ENCODE measurements at regions of chr2 and their contacts with region 1.

Region 1: DNA sequence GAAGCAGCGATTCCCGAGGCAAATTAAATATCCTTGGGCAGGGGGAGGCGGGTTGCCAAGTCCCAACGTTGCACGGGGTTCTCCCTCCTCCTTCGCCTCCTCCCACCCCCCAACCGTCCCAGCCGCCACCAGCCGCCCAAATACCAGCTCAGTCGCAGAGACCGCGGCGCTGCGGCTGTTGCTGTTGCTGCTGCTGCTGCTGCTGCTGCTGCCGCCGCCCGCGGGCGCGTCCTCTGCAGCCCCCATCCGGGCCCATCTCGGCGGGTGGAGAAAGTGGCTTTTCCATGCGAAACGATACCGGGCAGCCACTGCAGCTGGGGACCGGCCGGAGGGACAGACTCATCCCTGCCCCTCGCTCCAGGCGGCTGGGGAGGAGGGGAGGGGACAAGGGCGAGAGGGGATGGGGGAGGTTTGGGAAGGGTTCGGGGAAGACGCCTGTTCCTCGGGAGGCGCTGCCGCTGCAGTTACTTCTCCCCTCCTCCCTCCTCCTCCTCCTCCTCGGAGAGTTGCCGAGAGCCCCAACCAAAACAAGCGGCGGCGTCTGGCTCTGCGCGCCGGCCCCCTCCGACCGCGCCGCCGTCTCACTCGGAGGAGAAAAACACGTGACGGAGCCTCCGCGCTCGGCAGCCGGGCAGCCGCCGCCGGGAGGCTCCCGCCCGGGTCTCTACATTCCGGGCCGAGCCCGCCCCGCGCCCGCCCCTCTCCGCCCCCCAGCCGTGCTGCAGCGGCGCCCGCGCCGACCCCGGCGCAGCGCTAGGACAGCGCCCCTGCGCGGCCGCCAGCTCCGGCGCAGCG is at the start of gene IRS1:
- DNase-seq: peak; percentile 71
- ATAC-seq: peak; percentile 65
- H3K4me3 Mint-ChIP-seq: peak within 1 kb of the TSS; percentile 84
- H3K27ac Mint-ChIP-seq: peak within 1 kb of the TSS; percentile 80
- H3K4me1 Mint-ChIP-seq: peaks cover 45% of the 10 kb centered on the region
- H3K27me3 Mint-ChIP-seq: peaks cover under 1% of the 10 kb centered on the region
- CTCF ChIP-seq: no peak
- total RNA-seq, gene IRS1: 3.5 to 4.0 TPM

Region 2: DNA sequence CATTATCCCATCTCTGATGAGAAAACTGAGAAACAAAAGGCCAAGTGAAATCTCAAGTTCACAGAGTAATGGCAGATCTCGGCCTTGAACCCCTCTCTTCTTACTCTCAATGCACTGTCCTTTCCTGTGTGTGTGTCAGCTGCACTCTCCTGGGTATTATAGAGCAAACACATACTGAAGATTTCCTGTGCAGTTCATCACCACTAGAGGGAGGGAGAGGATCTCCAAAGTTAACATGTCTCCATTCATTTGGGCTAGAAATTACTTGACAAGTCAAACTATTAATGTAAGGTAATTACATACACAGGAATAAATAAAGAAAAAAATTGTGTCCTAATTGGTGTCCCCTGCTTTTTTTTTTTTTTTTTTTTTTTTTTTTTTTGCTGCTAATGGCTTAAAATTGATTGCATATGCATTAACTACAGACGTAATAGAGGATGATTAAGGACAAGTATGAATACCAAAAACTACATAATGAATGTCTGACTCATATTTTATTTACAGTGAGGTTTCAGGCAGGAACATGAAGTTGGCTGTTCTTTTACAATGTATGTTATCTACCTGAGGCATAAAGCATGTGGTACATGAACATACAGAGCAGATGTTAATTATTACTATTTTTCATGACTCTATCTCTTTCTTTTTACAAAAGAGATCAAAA is 1130.6 kb before region 1 on chr2:
- CTCF ChIA-PET with region 1: interaction called, 3 read pairs
- POLR2A ChIA-PET with region 1: no interaction called
- intact Hi-C with region 1: loop called (anchors 5 kb)
- DNase-seq: peak; percentile 19
- ATAC-seq: peak; percentile 80
- H3K4me3 Mint-ChIP-seq: no peak overlapping the region
- H3K27ac Mint-ChIP-seq: no peak overlapping the region
- H3K4me1 Mint-ChIP-seq: no peaks in the 10 kb centered on the region
- H3K27me3 Mint-ChIP-seq: peaks cover 8% of the 10 kb centered on the region
- CTCF ChIP-seq: peak; percentile 68

Region 3: GRCh38 chr2:226215902-226216503 is 583.4 kb before region 1 on chr2:
- CTCF ChIA-PET with region 1: interaction called, 37 read pairs
- POLR2A ChIA-PET with region 1: interaction called, 3 read pairs
- intact Hi-C with region 1: loop called (anchors 5 kb)
- DNase-seq: peak; percentile 75
- ATAC-seq: peak; percentile 90
- H3K4me3 Mint-ChIP-seq: no peak overlapping the region
- H3K27ac Mint-ChIP-seq: no peak overlapping the region
- H3K4me1 Mint-ChIP-seq: no peaks in the 10 kb centered on the region
- H3K27me3 Mint-ChIP-seq: peaks cover 5% of the 10 kb centered on the region
- CTCF ChIP-seq: peak; percentile 70

Region 4: DNA sequence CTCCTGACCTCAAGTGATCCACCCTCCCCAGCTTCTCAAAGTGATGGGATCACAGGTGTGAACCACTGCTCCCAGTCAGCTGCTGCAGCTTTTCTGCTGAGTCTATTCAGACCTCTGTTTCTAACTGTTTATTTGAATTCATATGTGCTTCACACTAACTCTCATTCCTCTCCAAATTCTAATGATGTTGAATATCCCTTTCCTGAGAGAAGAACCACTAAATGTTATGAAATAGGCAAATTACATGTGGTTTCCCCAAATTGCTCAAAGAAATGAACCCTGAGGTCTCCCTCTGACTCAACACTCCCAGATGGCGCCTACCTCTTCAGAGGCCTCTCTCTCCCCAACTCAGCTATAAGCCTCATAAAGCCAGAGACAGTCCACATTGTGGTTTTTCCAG is 98.3 kb before region 1 on chr2:
- CTCF ChIA-PET with region 1: no interaction called
- POLR2A ChIA-PET with region 1: no interaction called
- intact Hi-C with region 1: no loop called
- DNase-seq: peak; percentile 9
- ATAC-seq: no peak
- H3K4me3 Mint-ChIP-seq: no peak overlapping the region
- H3K27ac Mint-ChIP-seq: no peak overlapping the region
- H3K4me1 Mint-ChIP-seq: peaks cover 4% of the 10 kb centered on the region
- H3K27me3 Mint-ChIP-seq: peaks cover 10% of the 10 kb centered on the region
- CTCF ChIP-seq: no peak

Region 5: GRCh38 chr2:226818930-226819329 is 19.6 kb after region 1 on chr2:
- CTCF ChIA-PET with region 1: interaction called, 17 read pairs
- POLR2A ChIA-PET with region 1: no interaction called
- intact Hi-C with region 1: no loop called
- DNase-seq: no peak
- ATAC-seq: no peak
- H3K4me3 Mint-ChIP-seq: no peak overlapping the region
- H3K27ac Mint-ChIP-seq: no peak overlapping the region
- H3K4me1 Mint-ChIP-seq: no peaks in the 10 kb centered on the region
- H3K27me3 Mint-ChIP-seq: peaks cover 10% of the 10 kb centered on the region
- CTCF ChIP-seq: no peak

Region 6: DNA sequence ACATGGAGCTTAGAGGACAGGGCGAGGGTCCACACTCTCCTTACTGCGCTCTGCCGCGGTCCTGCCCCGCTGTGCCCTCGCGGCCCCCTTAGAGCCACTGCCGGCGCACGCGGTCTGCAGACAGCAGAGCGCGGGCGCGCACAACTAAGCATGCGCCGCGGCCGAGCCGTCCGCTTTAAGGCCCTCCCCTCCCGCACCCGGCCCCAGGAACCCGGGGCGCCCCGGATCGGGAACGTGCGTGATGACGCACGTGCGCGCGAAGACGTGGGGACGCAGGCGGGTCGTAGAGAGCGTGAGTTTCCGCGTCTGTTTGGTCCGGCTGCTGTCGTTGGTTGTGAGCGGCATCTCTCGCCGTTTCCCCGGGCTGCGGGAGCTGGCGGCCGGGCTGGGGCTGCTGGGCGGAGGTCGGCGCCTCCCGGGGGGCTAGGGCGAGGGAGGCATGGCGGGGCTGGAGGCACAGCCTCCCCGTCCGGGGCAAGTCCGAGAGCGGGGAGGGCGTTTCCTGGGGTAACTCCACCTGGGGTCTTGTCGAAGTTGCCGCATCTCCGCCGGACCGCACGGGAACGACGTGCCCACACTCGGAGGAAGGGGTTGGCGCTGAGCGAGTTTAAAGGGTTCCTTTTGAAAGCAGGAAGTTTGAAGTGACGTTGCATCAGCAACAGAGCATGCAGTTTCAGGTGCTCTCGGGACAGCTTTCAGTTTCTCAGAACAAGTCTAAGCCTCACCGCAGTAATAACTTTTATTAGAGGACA is 36.6 kb after region 1 on chr2 and contains the start of gene RHBDD1:
- CTCF ChIA-PET with region 1: interaction called, 18 read pairs
- POLR2A ChIA-PET with region 1: interaction called, 12 read pairs
- intact Hi-C with region 1: loop called (anchors 5 kb)
- DNase-seq: peak; percentile 95
- ATAC-seq: peak; percentile 87
- H3K4me3 Mint-ChIP-seq: peak within 1 kb of the TSS; percentile 88
- H3K27ac Mint-ChIP-seq: peak within 1 kb of the TSS; percentile 96
- H3K4me1 Mint-ChIP-seq: peaks cover 49% of the 10 kb centered on the region
- H3K27me3 Mint-ChIP-seq: no peaks in the 10 kb centered on the region
- CTCF ChIP-seq: no peak
- total RNA-seq, gene RHBDD1: 34.3 to 35.9 TPM

Measured in activated CD8-positive, alpha-beta T cell treated with anti-CD3 and anti-CD28 coated beads for 36 hours (primary cell).